Caco-2 (cell line): ENCODE measurements at regions of chr1 and their contacts with region 1.

Region 1: GRCh38 chr1:163071405-163072255 is 2.5 kb downstream of the RGS4 start:
- DNase-seq: peak; percentile 67 to 69
- H3K4me3 ChIP-seq: no peak overlapping the region
- H3K4me3 Mint-ChIP-seq: no peak overlapping the region
- H3K27ac Mint-ChIP-seq: no peak overlapping the region
- H3K4me1 ChIP-seq: peaks cover 3% of the 10 kb centered on the region; the same call in 1 of the 2 replicates
- H3K4me1 Mint-ChIP-seq: no peaks in the 10 kb centered on the region
- H3K27me3 ChIP-seq: no peaks in the 10 kb centered on the region
- H3K27me3 Mint-ChIP-seq: peaks cover 13% of the 10 kb centered on the region
- CTCF ChIP-seq: peak; percentile 69 to 82

Region 2: GRCh38 chr1:163094589-163094988 is 23.0 kb after region 1 on chr1:
- CTCF ChIA-PET with region 1: no interaction called
- POLR2A ChIA-PET with region 1: no interaction called
- intact Hi-C with region 1: no loop called
- DNase-seq: no peak
- H3K4me3 ChIP-seq: no peak overlapping the region
- H3K4me3 Mint-ChIP-seq: no peak overlapping the region
- H3K27ac Mint-ChIP-seq: no peak overlapping the region
- H3K4me1 ChIP-seq: no peaks in the 10 kb centered on the region
- H3K4me1 Mint-ChIP-seq: no peaks in the 10 kb centered on the region
- H3K27me3 ChIP-seq: no peaks in the 10 kb centered on the region
- H3K27me3 Mint-ChIP-seq: peaks cover 13% of the 10 kb centered on the region
- CTCF ChIP-seq: no peak

Region 3: GRCh38 chr1:163174524-163175437 is 103.2 kb after region 1 on chr1:
- CTCF ChIA-PET with region 1: interaction called, 4 read pairs
- POLR2A ChIA-PET with region 1: no interaction called
- intact Hi-C with region 1: loop called (anchors 1 kb)
- DNase-seq: peak; percentile 34 to 55
- H3K4me3 ChIP-seq: no peak overlapping the region
- H3K4me3 Mint-ChIP-seq: no peak overlapping the region
- H3K27ac Mint-ChIP-seq: no peak overlapping the region
- H3K4me1 ChIP-seq: no peaks in the 10 kb centered on the region
- H3K4me1 Mint-ChIP-seq: no peaks in the 10 kb centered on the region
- H3K27me3 ChIP-seq: no peaks in the 10 kb centered on the region
- H3K27me3 Mint-ChIP-seq: peaks cover 3% of the 10 kb centered on the region
- CTCF ChIP-seq: peak; percentile 82 to 84